ENCODE measurements at regions of chr17 and their contacts with region 1.

Region 1: DNA sequence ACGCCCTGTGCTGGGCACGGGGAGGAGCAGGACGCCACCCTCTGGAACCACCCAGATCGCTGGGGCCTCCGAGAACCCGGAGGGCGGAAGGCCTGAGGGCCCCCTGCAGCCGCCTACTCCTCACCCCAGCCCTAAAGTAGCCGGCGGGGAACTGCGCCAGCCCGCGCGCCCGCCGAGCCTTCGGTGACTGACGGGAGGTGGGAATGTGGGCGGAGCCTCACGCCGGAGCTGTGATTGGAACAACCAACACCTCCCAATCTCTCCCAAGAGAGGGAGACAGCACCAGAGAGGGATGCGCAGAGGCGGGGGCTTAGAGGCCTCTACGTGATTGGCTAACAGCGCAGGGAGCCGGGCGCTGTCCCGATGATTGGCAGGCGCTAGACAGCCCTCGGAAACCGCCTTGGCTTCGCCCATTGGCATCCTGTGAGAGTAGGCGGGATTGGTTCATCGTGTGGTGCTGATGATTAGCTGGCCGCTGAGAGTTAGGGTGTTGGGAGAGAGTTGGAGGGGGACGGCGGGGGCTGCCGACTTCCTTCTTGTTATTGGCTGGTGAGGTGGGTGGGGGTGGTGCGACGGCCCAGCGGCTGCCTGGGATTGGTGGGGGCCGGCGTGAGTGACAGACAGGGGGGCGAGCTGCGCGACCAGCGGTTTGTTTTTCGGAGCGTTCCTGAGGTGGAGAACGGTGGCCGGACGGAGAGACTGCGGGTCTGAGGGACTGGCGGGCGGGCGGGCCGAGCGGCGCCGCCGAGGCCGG is at the start of gene MAP3K3:
- DNase-seq: peak; percentile 99 to 100
- ATAC-seq: peak; percentile 92 to 93
- H3K4me3 ChIP-seq: peak within 1 kb of the TSS; percentile 67 to 84 (median 74)
- H3K27ac ChIP-seq: peak within 1 kb of the TSS; percentile 85 to 90 (median 87)
- H3K4me1 ChIP-seq: peaks cover 40 to 42% of the 10 kb centered on the region in 2 donors
- H3K27me3 ChIP-seq: no peaks in the 10 kb centered on the region
- CTCF ChIP-seq: peak in 2 of 5 experiments; percentile 23 to 26
- POLR2A ChIP-seq: peak; percentile 84 to 87
- total RNA-seq, gene MAP3K3: 21.8 to 58.7 (median 29.7) TPM

Region 2: GRCh38 chr17:63685041-63685440 is 63.1 kb after region 1 on chr17:
- in situ Hi-C with region 1: no loop called
- intact Hi-C with region 1: no loop called
- DNase-seq: no peak
- ATAC-seq: no peak
- H3K4me3 ChIP-seq: no peak overlapping the region
- H3K27ac ChIP-seq: no peak overlapping the region
- H3K4me1 ChIP-seq: no peaks in the 10 kb centered on the region
- H3K27me3 ChIP-seq: no peaks in the 10 kb centered on the region
- CTCF ChIP-seq: no peak
- POLR2A ChIP-seq: no peak

Region 3: DNA sequence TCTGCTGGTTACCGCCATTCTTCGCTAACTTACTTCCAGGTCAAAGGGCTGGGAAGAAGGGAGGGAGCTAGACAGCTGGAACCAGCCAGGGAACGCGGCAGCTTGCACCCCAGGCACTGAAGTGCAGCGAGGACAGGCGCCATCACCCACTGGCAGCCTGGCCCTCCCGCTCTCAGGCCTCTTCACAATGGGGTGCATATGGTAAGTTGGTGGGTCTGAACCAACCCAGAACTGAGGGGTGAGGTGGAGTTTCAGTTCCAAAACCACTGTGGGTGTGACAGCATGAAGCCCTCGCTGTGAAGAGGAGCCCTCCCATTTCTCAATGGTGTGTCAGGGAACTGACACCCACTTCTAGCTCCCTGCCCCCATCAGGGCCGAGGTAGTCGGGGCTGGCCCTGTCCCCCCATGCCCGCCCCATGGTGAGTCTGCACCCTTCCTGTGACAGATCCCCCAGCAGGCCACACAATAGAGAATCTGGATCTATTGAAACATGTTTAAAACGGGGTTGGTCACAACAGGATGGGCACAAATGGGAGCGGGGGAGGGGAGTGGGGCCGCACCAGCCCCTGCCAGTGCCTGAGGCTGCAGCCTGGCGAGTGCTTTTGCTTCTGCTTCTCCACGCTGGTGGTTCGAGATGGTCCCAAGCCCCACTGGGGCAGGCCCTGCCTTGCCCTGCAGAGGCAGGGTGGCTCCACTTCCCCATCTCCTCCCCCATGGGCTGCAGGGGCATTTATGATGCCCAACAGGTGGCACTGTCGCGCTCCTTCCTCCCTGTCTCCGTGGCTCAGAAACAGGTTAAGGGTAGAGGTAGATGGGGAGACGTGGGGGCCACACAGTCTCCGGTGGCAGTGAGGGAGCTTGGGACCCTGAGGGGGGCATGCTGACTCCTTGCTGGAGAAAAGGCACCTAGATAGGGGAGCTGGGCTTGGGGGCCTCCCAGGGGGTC is 75.7 kb after region 1 on chr17:
- in situ Hi-C with region 1: no loop called
- intact Hi-C with region 1: loop called (anchors 5 kb)
- DNase-seq: peak in 1 of 2 donors; percentile 52
- ATAC-seq: peak in 1 of 2 donors; percentile 47
- H3K4me3 ChIP-seq: no peak overlapping the region
- H3K27ac ChIP-seq: no peak overlapping the region
- H3K4me1 ChIP-seq: peaks cover 17 to 24% of the 10 kb centered on the region in 2 donors
- H3K27me3 ChIP-seq: peaks cover 5 to 20% (median 10%) of the 10 kb centered on the region in 3 donors
- CTCF ChIP-seq: peak in 4 of 5 experiments; percentile 29 to 62 (median 47)
- POLR2A ChIP-seq: no peak

Region 4: DNA sequence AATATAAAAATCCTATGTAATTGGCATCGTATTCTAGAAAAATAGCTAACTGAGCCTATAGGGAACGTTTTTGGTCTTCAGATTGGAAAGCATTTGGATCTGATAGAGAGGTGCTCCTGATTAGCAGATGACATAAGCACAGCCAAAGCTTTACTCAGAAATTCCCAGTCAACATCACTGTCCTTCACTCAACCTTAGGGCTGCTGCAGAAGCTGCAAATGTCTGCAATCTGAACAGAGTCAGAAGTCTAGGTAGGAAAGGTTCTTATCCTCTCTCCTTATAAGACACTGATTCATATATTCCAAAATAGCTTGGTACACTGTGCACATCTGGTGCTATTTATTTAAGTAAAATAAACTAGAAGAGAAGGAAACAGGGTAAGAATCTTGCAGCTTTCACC is 100.5 kb after region 1 on chr17:
- in situ Hi-C with region 1: no loop called
- intact Hi-C with region 1: no loop called
- DNase-seq: no peak
- ATAC-seq: no peak
- H3K4me3 ChIP-seq: no peak overlapping the region
- H3K27ac ChIP-seq: no peak overlapping the region
- H3K4me1 ChIP-seq: no peaks in the 10 kb centered on the region
- H3K27me3 ChIP-seq: no peaks in the 10 kb centered on the region
- CTCF ChIP-seq: no peak
- POLR2A ChIP-seq: no peak

Region 5: GRCh38 chr17:63741221-63742049 is 119.5 kb after region 1 on chr17 and contains the start of gene STRADA:
- in situ Hi-C with region 1: no loop called
- intact Hi-C with region 1: loop called (anchors 10 kb)
- DNase-seq: peak; percentile 98 to 99
- ATAC-seq: peak; percentile 94 to 98
- H3K4me3 ChIP-seq: peak within 1 kb of the TSS; percentile 77 to 85 (median 82)
- H3K27ac ChIP-seq: peak within 1 kb of the TSS; percentile 86 to 92 (median 90)
- H3K4me1 ChIP-seq: peaks cover 14% of the 10 kb centered on the region in 2 donors
- H3K27me3 ChIP-seq: no peaks in the 10 kb centered on the region
- CTCF ChIP-seq: no peak
- POLR2A ChIP-seq: peak; percentile 58 to 72
- total RNA-seq, gene STRADA: 7.5 to 15.0 (median 8.6) TPM

Region 6: DNA sequence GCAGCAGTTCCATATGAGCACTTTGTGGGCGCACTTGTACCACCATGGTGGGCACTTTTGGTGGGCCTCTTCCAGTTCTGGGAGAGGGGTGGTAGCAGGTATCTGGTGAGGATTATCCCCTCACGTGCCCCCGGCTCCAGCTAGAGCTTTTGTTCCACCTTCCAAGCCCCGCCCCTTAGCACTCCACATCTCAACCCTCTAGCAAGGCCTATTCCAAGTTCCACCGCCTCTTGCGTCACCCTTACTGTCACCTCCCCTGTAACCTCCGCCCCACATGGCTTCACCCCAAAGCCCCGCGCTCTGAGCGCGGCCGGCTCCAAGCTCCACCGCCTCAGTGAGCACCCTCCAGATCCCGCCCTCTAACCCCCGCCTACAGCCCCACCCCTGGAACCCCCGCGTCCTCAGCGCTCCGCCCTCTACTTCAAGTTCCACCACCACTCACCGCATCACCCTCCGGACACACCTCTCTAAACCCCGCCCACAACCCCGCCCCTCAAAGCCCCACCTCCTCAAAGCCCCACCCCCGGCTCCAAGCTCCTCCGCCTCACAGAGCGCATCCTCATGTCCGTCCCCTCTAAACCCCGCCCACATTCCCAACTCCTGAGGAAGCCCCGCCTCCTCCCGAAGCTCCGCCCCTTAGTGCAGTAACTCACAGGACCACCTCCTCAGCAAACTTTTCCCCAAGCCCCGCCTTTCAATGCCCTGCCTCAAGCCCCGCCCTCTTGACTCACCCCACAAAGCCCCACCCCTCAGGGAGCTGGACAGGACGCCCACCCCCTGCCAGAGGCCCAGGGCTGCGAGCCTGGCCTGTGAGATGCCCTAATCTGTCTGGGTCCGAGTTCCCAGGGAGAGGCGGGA is 339.6 kb after region 1 on chr17:
- in situ Hi-C with region 1: no loop called
- intact Hi-C with region 1: no loop called
- DNase-seq: peak; percentile 84 to 94
- ATAC-seq: peak; percentile 63 to 65
- H3K4me3 ChIP-seq: peak overlapping the region in 3 of 4 donors; percentile 24 to 28 (median 25)
- H3K27ac ChIP-seq: peak overlapping the region; percentile 96 to 100 (median 99)
- H3K4me1 ChIP-seq: peaks cover 65 to 66% of the 10 kb centered on the region in 2 donors
- H3K27me3 ChIP-seq: no peaks in the 10 kb centered on the region
- CTCF ChIP-seq: no peak
- POLR2A ChIP-seq: peak; percentile 27 to 56

Measured in gastrocnemius medialis (tissue), 4 donors.